PC-9 (cell line): ENCODE measurements at regions of chr6 and their contacts with region 1.

Region 1: DNA sequence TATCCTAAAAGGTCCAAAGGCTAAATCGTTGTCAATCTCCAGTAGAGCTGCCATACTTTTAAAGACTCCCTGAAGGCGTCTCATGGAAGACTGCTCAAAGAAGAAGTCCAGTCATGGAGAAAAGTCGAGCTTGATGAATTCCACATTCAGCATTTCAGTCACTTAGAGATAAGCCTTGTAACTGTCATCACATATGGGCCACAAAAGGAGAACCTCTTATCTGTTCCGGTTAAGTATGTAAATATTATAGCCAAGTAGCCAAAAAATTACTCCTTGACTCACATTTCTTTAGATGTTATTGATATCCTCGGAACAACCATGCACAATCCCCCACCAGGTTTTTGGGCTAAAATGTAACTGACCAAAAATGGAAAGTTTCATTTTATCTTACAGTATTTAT is 9.8 kb upstream of the CNKSR3 start:
- DNase-seq: no peak
- H3K4me3 ChIP-seq: no peak overlapping the region
- H3K27ac ChIP-seq: no peak overlapping the region
- H3K4me1 ChIP-seq: no peaks in the 10 kb centered on the region
- H3K27me3 ChIP-seq: no peaks in the 10 kb centered on the region
- CTCF ChIP-seq: no peak

Region 2: DNA sequence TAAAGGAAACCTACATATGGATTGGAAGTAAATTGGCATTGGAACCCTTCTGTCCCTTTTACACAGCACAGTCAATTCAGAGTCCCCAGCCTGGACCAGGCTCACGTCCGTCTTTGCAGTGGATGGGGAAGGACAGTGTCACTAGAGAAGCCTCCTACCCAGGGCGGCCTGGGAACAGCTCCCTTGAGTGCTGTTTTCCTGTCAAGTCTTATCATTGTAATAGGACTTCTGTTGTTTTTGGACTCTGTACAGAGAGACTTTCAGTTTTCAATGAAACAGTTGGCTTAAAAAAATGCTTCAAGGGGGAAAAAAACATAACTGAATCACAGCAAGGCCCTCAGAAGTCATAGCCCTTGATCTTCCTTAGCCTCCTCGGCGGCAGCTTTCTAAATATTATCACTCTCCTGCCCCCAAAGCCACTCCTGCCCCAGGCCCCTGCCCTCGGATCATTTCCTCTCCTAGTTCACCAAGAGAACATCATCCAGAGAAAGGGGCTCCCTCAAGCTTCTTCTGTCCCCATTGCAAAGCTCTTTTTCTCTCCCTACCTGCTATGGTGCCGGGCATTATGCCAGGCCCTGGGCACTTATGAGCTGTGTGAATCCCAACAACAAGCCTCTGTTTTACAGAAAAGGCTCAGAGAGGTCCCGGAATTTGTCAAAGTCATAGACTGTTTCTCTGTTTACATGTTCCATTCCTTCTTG is 28.0 kb after region 1 on chr6:
- CTCF ChIA-PET with region 1: no interaction called
- POLR2A ChIA-PET with region 1: interaction called, 16 read pairs
- intact Hi-C with region 1: no loop called
- DNase-seq: no peak
- H3K4me3 ChIP-seq: no peak overlapping the region
- H3K27ac ChIP-seq: no peak overlapping the region
- H3K4me1 ChIP-seq: no peaks in the 10 kb centered on the region
- H3K27me3 ChIP-seq: no peaks in the 10 kb centered on the region
- CTCF ChIP-seq: no peak

Region 3: DNA sequence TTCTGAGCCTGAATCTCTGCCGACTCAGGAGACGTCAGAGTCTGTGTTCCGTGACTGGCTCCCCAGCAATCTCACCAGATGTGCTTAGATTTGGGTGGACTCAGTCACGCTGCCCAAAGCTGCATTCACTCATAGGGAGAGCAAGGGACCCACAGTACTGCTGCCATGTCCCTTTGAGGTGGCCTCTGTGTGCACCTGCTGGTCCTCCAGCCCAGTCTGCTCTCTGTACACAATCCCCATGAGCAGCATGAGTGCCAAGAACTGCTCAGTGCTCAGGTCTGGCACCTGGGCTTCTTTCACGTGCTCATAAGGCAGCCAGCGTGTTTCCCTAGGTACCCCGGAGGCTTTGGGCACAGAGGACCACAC is 430.7 kb after region 1 on chr6:
- CTCF ChIA-PET with region 1: no interaction called
- POLR2A ChIA-PET with region 1: no interaction called
- intact Hi-C with region 1: no loop called
- DNase-seq: no peak
- H3K4me3 ChIP-seq: no peak overlapping the region
- H3K27ac ChIP-seq: no peak overlapping the region
- H3K4me1 ChIP-seq: peaks cover 20% of the 10 kb centered on the region
- H3K27me3 ChIP-seq: no peaks in the 10 kb centered on the region
- CTCF ChIP-seq: no peak